ENCODE measurements at regions of chr3 and their contacts with region 1.

Region 1: GRCh38 chr3:128680602-128681368 is 30.2 kb upstream of the RPN1 start:
- DNase-seq: peak; percentile 99 to 100
- ATAC-seq: peak; percentile 97 to 99 (median 98)
- H3K4me3 ChIP-seq: peak overlapping the region; percentile 76
- H3K27ac ChIP-seq: peak overlapping the region; percentile 96
- H3K4me1 ChIP-seq: no peaks in the 10 kb centered on the region
- H3K27me3 ChIP-seq: no peaks in the 10 kb centered on the region
- CTCF ChIP-seq: peak; percentile 91

Region 2: DNA sequence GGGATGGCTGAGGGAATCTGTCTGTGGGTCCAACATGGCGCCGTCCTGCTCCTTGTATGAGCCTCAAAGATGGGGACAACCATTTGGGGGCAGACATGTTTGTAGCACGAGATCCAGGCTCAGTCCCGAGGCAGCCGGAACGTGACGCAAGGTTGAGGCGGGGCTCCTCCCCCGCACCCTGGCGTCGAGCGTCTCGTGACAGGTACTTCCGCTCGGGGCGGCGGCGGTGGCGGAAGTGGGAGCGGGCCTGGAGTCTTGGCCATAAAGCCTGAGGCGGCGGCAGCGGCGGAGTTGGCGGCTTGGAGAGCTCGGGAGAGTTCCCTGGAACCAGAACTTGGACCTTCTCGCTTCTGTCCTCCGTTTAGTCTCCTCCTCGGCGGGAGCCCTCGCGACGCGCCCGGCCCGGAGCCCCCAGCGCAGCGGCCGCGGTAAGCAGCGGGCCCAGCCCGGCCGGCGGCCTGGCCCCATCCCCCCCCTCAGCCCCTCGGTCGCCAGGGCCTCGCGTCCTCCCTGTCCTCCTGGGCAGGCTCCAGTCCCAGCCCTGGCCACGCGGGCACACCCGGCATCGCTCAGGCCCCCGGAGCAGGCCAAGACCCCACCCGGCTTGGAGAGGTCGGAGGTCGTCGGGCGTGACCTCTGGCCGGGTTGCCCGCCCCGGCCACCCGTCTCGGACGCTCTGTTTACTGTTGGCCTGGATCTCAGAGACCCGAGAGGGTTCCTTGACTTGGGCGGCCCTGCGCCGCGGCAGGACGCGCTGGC is 45.3 kb after region 1 on chr3 and contains the start of gene RAB7A:
- intact Hi-C with region 1: loop called in 1 of 2 experiments (anchors 1 kb)
- DNase-seq: peak; percentile 98 to 99
- ATAC-seq: peak; percentile 93 to 98 (median 97)
- H3K4me3 ChIP-seq: peak within 1 kb of the TSS; percentile 98
- H3K27ac ChIP-seq: peak within 1 kb of the TSS; percentile 100
- H3K4me1 ChIP-seq: peaks cover 34% of the 10 kb centered on the region
- H3K27me3 ChIP-seq: no peaks in the 10 kb centered on the region
- CTCF ChIP-seq: no peak
- total RNA-seq, gene RAB7A: 232 to 375 (median 284) TPM

Region 3: GRCh38 chr3:128794770-128795649 is 114.2 kb after region 1 on chr3:
- intact Hi-C with region 1: loop called (anchors 1 to 5 kb)
- DNase-seq: peak in 1 of 2 donors; percentile 65
- ATAC-seq: peak; percentile 80 to 89 (median 82)
- H3K4me3 ChIP-seq: no peak overlapping the region
- H3K27ac ChIP-seq: peak overlapping the region; percentile 83
- H3K4me1 ChIP-seq: peaks cover 51% of the 10 kb centered on the region
- H3K27me3 ChIP-seq: no peaks in the 10 kb centered on the region
- CTCF ChIP-seq: peak; percentile 80

Region 4: DNA sequence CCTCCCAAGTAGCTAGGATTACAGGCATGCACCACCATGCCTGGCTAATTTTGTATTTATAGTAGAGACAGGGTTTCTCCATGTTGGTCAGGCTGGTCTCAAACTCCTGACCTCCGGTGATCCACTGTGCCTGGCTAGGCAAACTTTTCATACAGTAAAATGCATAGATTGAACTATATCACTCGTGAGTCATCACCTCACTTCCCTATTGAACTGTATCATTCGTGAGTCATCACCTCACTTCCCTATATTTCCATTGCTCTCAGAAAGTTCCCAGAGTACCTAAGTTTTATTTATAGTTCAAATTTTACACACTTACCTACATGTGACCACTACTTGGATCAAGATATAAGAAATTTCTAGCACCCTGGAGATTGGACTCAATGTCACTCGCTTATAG is 125.0 kb after region 1 on chr3:
- intact Hi-C with region 1: loop called in 1 of 2 experiments (anchors 5 kb)
- DNase-seq: no peak
- ATAC-seq: no peak
- H3K4me3 ChIP-seq: peak overlapping the region; percentile 50
- H3K27ac ChIP-seq: peak overlapping the region; percentile 90
- H3K4me1 ChIP-seq: peaks cover 88% of the 10 kb centered on the region
- H3K27me3 ChIP-seq: no peaks in the 10 kb centered on the region
- CTCF ChIP-seq: no peak

Region 5: DNA sequence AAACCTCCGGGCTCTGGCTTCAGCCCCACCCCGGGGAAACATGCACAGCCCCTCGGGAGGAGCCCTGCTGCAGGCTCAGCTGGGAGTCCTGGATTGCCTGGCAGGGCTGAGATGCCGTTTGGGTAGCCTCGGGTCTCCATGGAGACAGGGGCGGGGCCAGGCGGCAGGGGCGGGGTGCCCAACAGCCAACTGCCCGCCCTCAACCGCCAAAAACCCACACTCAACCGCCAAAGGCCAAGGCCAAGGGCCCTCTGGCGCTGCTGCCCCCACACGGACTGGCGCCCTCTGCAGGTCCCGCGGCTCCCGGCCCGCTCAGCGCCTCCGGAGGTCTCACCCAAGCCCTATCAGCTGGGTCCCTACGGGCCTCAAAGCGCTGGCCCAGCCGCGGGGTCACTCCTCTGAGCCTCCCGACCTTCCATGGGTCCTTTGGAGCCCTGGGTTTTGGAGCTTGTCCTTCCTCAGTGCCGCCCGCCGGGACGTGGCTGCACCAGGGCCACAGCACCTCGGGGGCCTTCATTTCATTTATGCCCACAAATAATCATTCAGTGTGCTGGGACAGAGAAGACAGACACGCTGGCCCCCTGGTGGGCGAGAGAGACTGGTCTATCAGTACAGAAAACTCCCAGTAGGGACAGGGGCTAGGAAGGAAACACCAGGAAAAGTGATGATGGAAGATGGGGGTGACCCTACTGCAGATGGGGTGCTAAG is 165.1 kb after region 1 on chr3:
- intact Hi-C with region 1: loop called (anchors 1 to 5 kb)
- DNase-seq: peak; percentile 88 to 96
- ATAC-seq: peak; percentile 94 to 97 (median 96)
- H3K4me3 ChIP-seq: peak overlapping the region; percentile 66
- H3K27ac ChIP-seq: peak overlapping the region; percentile 81
- H3K4me1 ChIP-seq: peaks cover 12% of the 10 kb centered on the region
- H3K27me3 ChIP-seq: no peaks in the 10 kb centered on the region
- CTCF ChIP-seq: peak; percentile 67

Region 6: DNA sequence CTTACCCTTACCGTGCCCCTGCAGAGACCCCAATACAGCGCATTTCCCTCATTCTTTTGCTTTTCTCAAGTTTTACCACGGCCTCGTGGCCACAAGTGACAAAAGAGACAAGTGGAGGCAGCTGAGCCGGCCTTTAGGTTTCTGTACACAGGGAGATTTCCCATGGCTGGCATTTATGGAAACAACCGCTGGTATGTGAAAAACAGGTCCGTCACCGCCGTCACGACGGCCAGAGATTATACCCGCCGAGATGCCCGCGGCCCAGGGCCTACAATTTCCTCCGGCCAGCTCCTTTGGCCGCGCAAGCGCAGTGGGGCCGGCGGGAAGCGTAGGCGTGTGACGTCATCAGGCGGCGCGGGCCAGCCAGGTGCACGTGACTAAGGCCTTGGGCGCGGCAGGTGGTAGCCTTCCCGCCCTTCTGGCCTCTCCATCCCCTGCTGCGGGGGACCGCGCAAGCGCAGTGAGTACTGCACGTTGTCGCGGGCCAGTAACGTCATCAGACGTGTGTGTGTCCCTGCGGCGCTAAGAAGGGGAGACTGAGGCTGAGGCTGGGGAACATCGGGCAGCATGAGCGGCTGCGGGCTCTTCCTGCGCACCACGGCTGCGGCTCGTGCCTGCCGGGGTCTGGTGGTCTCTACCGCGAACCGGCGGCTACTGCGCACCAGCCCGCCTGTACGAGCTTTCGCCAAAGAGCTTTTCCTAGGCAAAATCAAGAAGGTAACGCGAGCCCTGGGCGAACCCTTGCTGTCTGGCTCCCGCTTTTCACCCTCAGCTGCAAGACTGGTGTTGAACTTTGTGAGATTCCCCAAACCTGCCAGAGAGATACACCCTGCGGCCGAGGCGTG is 198.6 kb after region 1 on chr3 and contains the start of gene ACAD9:
- intact Hi-C with region 1: loop called in 1 of 2 experiments (anchors 5 kb)
- DNase-seq: peak; percentile 97 to 99
- ATAC-seq: peak; percentile 91 to 96 (median 94)
- H3K4me3 ChIP-seq: peak within 1 kb of the TSS; percentile 93
- H3K27ac ChIP-seq: peak within 1 kb of the TSS; percentile 97
- H3K4me1 ChIP-seq: peaks cover 44% of the 10 kb centered on the region
- H3K27me3 ChIP-seq: no peaks in the 10 kb centered on the region
- CTCF ChIP-seq: no peak
- total RNA-seq, gene ACAD9: 23.9 to 47.8 (median 32.6) TPM

Measured in psoas muscle (tissue), 8 donors.